Activated CD4-positive, alpha-beta memory T cell treated with anti-CD3 and anti-CD28 coated beads, Interleukin-2, amount 10 ng/mL, durations not matched to agents 7 days and 5 days (primary cell): ENCODE measurements at regions of chr5 and their contacts with region 1.

Region 1: DNA sequence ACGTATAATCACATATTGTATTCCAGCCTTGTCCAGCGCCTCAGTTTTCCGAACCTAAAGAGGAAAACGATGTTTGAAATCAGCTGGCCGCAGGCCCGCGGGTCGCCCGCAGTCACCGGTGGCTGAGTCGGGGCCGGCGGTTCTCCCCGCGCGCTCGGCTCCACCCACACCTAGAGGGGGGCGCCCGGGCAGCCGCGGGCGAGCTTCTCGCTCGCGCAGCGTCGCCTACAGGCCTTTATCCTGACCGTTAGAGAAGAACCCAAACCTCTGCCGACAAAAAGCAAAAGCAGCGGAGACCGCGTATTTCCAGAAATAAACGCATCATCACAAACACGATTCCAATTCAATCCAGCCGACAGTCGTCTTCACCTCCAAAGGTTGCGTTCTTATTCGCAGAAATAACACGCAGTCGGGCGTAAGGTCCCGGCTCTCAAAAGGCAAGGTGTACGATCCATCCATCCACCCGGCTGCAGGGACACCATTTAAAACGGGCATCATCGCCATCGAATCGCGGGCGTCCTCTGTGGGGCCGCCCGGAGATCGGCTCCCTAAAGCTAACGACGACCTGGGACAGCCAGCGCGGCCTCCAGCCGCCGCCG is 680 bp upstream of the NIPBL start:
- DNase-seq: peak; percentile 81
- H3K4me3 Mint-ChIP-seq: peak overlapping the region; percentile 78
- H3K27ac Mint-ChIP-seq: peak overlapping the region; percentile 96
- H3K4me1 Mint-ChIP-seq: peaks cover 42% of the 10 kb centered on the region
- H3K27me3 Mint-ChIP-seq: no peaks in the 10 kb centered on the region

Region 2: GRCh38 chr5:36897616-36898015 is 21.7 kb after region 1 on chr5:
- CTCF ChIA-PET with region 1: no interaction called
- POLR2A ChIA-PET with region 1: no interaction called
- DNase-seq: no peak
- H3K4me3 Mint-ChIP-seq: no peak overlapping the region
- H3K27ac Mint-ChIP-seq: no peak overlapping the region
- H3K4me1 Mint-ChIP-seq: peaks cover 25% of the 10 kb centered on the region
- H3K27me3 Mint-ChIP-seq: no peaks in the 10 kb centered on the region

Region 3: DNA sequence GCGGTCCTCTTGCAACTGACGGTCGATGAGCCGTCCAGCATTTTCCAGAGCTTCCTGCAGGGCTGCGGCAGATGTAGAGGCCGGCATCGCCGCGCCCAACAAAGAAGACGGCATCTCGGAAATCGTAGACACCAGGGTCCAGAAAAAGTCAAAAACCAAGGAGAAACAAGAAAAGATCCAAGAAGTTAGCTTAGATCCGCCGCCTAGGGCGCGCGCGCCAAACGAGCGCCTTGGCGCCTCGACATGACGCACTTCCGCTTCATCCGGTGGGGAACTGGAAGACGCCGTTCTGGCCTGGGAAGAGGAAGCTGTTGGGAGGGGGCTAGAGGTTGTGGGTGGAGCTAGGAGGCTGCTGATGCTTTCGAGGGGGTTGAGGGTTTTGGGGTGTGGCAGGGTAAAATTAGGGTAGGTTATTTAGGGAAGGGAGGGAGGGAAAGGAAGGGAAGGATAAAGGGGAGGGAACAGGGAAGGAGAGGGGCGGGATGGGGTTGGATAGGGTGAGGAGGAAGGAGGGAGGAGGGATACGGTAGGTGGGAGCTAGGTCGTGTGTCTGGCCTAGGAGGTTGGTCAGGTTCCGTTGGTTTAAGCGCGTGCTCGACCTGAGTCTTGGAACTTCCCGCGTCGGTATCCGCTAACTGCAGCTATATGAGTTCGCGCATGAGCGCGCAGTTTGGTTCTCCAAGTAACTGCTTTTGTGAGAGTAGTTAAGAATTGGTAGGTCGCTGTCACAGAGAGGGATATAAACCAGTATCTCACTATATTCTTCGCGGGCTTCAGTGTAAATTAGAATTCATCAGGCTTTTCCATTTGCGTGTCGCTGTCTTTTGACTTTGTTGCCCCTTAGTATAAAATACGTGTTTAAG is 495.2 kb after region 1 on chr5 and contains the start of gene NUP155:
- CTCF ChIA-PET with region 1: no interaction called
- POLR2A ChIA-PET with region 1: interaction called, 21 read pairs
- DNase-seq: peak; percentile 90
- H3K4me3 Mint-ChIP-seq: peak within 1 kb of the TSS; percentile 98
- H3K27ac Mint-ChIP-seq: peak within 1 kb of the TSS; percentile 93
- H3K4me1 Mint-ChIP-seq: peaks cover 39% of the 10 kb centered on the region
- H3K27me3 Mint-ChIP-seq: no peaks in the 10 kb centered on the region
- total RNA-seq, gene NUP155: 41.3 to 45.9 TPM